CD4-positive, alpha-beta memory T cell (primary cell): ENCODE measurements at regions of chr12 and their contacts with region 1.

Region 1: DNA sequence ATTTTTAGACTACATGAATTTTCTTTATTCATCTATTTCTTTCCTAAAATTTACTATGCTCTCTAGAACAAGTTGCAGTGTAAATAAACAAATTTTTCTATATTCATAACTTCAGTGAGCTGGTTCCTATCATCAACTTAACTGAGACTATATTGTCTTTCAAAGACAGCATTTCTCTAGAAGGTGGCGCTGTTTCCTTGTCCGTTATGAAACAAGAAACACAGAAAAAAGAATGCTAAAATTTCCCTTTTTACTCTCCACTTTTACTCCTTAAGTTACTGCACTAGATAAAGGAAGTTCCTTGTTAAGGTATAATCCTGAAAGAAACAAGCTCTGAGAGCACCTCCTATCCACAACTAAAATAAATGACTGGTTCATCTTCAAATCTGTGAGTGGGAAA is 8.2 kb upstream of the CLEC2A start:
- DNase-seq: no peak
- H3K4me3 ChIP-seq: no peak overlapping the region
- H3K4me3 Mint-ChIP-seq: no peak overlapping the region
- H3K27ac ChIP-seq: no peak overlapping the region
- H3K27ac Mint-ChIP-seq: no peak overlapping the region
- H3K4me1 ChIP-seq: no peaks in the 10 kb centered on the region
- H3K4me1 Mint-ChIP-seq: peaks cover 4 to 25% (median 9%) of the 10 kb centered on the region in 4 donors
- H3K27me3 ChIP-seq: no peaks in the 10 kb centered on the region
- H3K27me3 Mint-ChIP-seq: peaks cover 0 to 3% of the 10 kb centered on the region in 2 donors

Region 2: GRCh38 chr12:9883175-9883574 is 57.2 kb before region 1 on chr12:
- CTCF ChIA-PET with region 1: no interaction called
- POLR2A ChIA-PET with region 1: no interaction called
- intact Hi-C with region 1: no loop called
- DNase-seq: no peak
- H3K4me3 ChIP-seq: no peak overlapping the region
- H3K4me3 Mint-ChIP-seq: no peak overlapping the region
- H3K27ac ChIP-seq: no peak overlapping the region
- H3K27ac Mint-ChIP-seq: no peak overlapping the region
- H3K4me1 ChIP-seq: no peaks in the 10 kb centered on the region
- H3K4me1 Mint-ChIP-seq: peaks cover 0 to 5% (median 2%) of the 10 kb centered on the region in 4 donors
- H3K27me3 ChIP-seq: no peaks in the 10 kb centered on the region
- H3K27me3 Mint-ChIP-seq: peaks cover 0 to 1% of the 10 kb centered on the region in 2 donors

Region 3: DNA sequence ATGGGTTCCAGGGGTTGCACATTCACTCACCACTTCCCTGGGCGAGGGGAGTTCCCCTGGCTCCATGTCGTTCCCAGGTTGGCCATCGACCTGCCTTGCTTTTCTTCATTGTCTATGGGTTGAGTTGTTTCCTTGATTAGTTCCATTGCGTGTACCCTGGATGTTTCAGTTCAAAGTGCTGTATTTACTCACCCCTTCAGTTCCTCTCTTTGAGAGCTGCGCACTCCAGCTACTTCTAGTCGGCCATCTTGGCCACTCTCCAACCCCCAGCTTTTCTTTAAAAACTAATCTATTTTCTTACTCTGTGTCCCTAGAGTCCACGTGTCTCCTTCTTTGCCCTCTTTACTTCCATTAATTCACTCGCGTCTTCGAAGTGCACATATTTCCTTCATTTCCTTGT is 19.9 kb before region 1 on chr12:
- CTCF ChIA-PET with region 1: no interaction called
- POLR2A ChIA-PET with region 1: no interaction called
- intact Hi-C with region 1: no loop called
- DNase-seq: no peak
- H3K4me3 ChIP-seq: no peak overlapping the region
- H3K4me3 Mint-ChIP-seq: no peak overlapping the region
- H3K27ac ChIP-seq: no peak overlapping the region
- H3K27ac Mint-ChIP-seq: peak overlapping the region in 1 of 7 donors; percentile 49
- H3K4me1 ChIP-seq: no peaks in the 10 kb centered on the region
- H3K4me1 Mint-ChIP-seq: peaks cover 1 to 6% (median 5%) of the 10 kb centered on the region in 4 donors
- H3K27me3 ChIP-seq: no peaks in the 10 kb centered on the region
- H3K27me3 Mint-ChIP-seq: peaks cover 0 to 3% of the 10 kb centered on the region in 2 donors

Region 4: DNA sequence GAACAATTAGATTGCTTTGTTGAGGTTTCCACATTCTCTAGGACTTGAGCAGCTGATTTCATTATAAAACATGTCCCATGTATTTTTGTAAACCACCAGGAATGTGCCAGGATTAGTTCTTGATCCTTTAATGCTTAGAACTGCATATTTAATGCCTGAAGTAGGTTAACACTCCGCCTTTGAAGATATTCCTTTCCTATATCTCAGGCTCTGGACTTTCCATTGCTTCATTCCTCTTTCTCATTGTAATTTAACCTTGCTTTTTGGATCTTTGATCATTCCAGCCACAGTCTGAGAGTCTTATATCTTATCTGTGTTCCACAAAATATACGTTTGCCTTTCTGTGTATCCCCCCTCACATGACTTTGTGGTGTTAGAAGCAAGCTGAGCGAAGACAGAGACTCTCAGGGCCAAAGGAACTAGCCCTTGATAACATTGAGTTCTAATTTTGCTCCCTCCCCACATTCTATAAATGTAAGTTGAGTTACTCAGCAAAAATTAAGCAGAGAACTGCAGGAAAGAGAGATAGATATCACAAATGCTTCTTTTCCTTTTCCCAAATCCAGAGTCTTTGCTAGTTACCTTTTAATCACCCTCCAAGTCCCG is 60.9 kb after region 1 on chr12:
- CTCF ChIA-PET with region 1: no interaction called
- POLR2A ChIA-PET with region 1: no interaction called
- intact Hi-C with region 1: loop called (anchors 5 kb)
- DNase-seq: no peak
- H3K4me3 ChIP-seq: no peak overlapping the region
- H3K4me3 Mint-ChIP-seq: no peak overlapping the region
- H3K27ac ChIP-seq: no peak overlapping the region
- H3K27ac Mint-ChIP-seq: no peak overlapping the region
- H3K4me1 ChIP-seq: no peaks in the 10 kb centered on the region
- H3K4me1 Mint-ChIP-seq: no peaks in the 10 kb centered on the region
- H3K27me3 ChIP-seq: no peaks in the 10 kb centered on the region
- H3K27me3 Mint-ChIP-seq: peaks cover 2 to 15% of the 10 kb centered on the region in 2 donors

Region 5: GRCh38 chr12:10140001-10140400 is 199.6 kb after region 1 on chr12:
- CTCF ChIA-PET with region 1: interaction called, 6 read pairs
- POLR2A ChIA-PET with region 1: no interaction called
- intact Hi-C with region 1: loop called (anchors 2 kb)
- DNase-seq: peak; percentile 35 to 53 (median 39)
- H3K4me3 ChIP-seq: no peak overlapping the region
- H3K4me3 Mint-ChIP-seq: no peak overlapping the region
- H3K27ac ChIP-seq: no peak overlapping the region
- H3K27ac Mint-ChIP-seq: no peak overlapping the region
- H3K4me1 ChIP-seq: no peaks in the 10 kb centered on the region
- H3K4me1 Mint-ChIP-seq: no peaks in the 10 kb centered on the region
- H3K27me3 ChIP-seq: no peaks in the 10 kb centered on the region
- H3K27me3 Mint-ChIP-seq: peaks cover 4 to 9% of the 10 kb centered on the region in 2 donors

Region 6: GRCh38 chr12:10190558-10191388 is 250.4 kb after region 1 on chr12:
- CTCF ChIA-PET with region 1: no interaction called
- POLR2A ChIA-PET with region 1: no interaction called
- intact Hi-C with region 1: loop called (anchors 2 kb)
- DNase-seq: peak; percentile 41 to 54 (median 49)
- H3K4me3 ChIP-seq: no peak overlapping the region
- H3K4me3 Mint-ChIP-seq: no peak overlapping the region
- H3K27ac ChIP-seq: no peak overlapping the region
- H3K27ac Mint-ChIP-seq: no peak overlapping the region
- H3K4me1 ChIP-seq: no peaks in the 10 kb centered on the region
- H3K4me1 Mint-ChIP-seq: peaks cover 3 to 5% (median 4%) of the 10 kb centered on the region in 4 donors
- H3K27me3 ChIP-seq: no peaks in the 10 kb centered on the region
- H3K27me3 Mint-ChIP-seq: peaks cover 10 to 17% of the 10 kb centered on the region in 2 donors

Region 7: GRCh38 chr12:10243818-10244520 is 303.6 kb after region 1 on chr12:
- CTCF ChIA-PET with region 1: no interaction called
- POLR2A ChIA-PET with region 1: no interaction called
- intact Hi-C with region 1: no loop called
- DNase-seq: no peak
- H3K4me3 ChIP-seq: no peak overlapping the region
- H3K4me3 Mint-ChIP-seq: peak overlapping the region in 7 of 8 donors; percentile 37 to 71 (median 57)
- H3K27ac ChIP-seq: no peak overlapping the region
- H3K27ac Mint-ChIP-seq: no peak overlapping the region
- H3K4me1 ChIP-seq: peaks cover 10% of the 10 kb centered on the region
- H3K4me1 Mint-ChIP-seq: peaks cover 5 to 9% (median 8%) of the 10 kb centered on the region in 4 donors
- H3K27me3 ChIP-seq: no peaks in the 10 kb centered on the region
- H3K27me3 Mint-ChIP-seq: peaks cover 2 to 7% of the 10 kb centered on the region in 2 donors